ENCODE measurements at regions of chr1 and their contacts with region 1.

Region 1: GRCh38 chr1:157659576-157660247 is 40.9 kb downstream of the FCRL3 start:
- DNase-seq: no peak
- ATAC-seq: no peak
- H3K4me3 Mint-ChIP-seq: no peak overlapping the region
- H3K27ac Mint-ChIP-seq: no peak overlapping the region
- H3K4me1 Mint-ChIP-seq: peaks cover 38% of the 10 kb centered on the region
- H3K27me3 Mint-ChIP-seq: no peaks in the 10 kb centered on the region
- CTCF ChIP-seq: no peak

Region 2: DNA sequence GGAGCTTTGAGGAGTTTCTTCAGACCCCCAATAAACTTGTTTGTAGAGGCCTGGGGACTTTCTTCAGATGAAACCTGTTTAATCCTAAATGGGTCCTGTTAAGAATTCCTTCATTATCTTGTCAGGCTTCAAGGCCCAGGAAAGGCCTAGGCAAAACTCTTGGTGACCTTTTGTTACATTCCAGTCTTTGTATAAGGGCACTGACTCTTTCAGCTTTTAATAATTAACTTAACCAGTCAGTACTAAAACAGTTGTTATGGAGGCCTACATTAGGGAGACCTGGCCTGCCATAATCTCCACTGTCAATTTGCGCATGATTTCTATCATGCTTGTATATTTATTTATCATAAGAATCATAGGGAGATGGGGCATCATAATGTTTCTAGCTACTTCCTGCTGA is 217.6 kb before region 1 on chr1:
- CTCF ChIA-PET with region 1: no interaction called
- POLR2A ChIA-PET with region 1: no interaction called
- intact Hi-C with region 1: no loop called
- DNase-seq: no peak
- ATAC-seq: no peak
- H3K4me3 Mint-ChIP-seq: no peak overlapping the region
- H3K27ac Mint-ChIP-seq: no peak overlapping the region
- H3K4me1 Mint-ChIP-seq: no peaks in the 10 kb centered on the region
- H3K27me3 Mint-ChIP-seq: peaks cover 3% of the 10 kb centered on the region
- CTCF ChIP-seq: no peak

Region 3: DNA sequence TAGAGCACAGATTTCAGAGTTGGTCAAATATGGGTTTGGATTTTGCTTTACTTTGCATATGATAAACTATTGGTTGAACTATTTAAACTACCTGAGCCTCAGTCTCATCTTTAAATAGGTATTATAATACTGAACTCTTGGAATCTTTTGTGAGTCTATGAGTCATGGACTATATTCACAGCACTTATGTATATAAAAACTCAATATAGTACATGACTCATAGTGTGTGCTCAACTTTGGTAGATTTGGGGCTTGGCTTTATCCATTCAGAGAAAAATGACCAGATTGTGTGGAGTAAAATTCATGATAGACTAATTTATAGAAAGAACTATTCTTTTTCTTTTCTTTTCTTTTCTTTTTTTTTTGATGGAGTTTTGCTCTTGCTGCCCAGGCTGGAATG is 12.2 kb after region 1 on chr1:
- CTCF ChIA-PET with region 1: no interaction called
- POLR2A ChIA-PET with region 1: no interaction called
- intact Hi-C with region 1: loop called (anchors 2 kb)
- DNase-seq: no peak
- ATAC-seq: no peak
- H3K4me3 Mint-ChIP-seq: no peak overlapping the region
- H3K27ac Mint-ChIP-seq: no peak overlapping the region
- H3K4me1 Mint-ChIP-seq: peaks cover 1% of the 10 kb centered on the region
- H3K27me3 Mint-ChIP-seq: no peaks in the 10 kb centered on the region
- CTCF ChIP-seq: no peak

Region 4: GRCh38 chr1:157734321-157734720 is 74.6 kb after region 1 on chr1:
- CTCF ChIA-PET with region 1: no interaction called
- POLR2A ChIA-PET with region 1: no interaction called
- intact Hi-C with region 1: no loop called
- DNase-seq: no peak
- ATAC-seq: peak; percentile 77
- H3K4me3 Mint-ChIP-seq: peak overlapping the region; percentile 39
- H3K27ac Mint-ChIP-seq: peak overlapping the region; percentile 88
- H3K4me1 Mint-ChIP-seq: peaks cover 78% of the 10 kb centered on the region
- H3K27me3 Mint-ChIP-seq: no peaks in the 10 kb centered on the region
- CTCF ChIP-seq: no peak